ENCODE measurements at regions of chr12 and their contacts with region 1.

Region 1: GRCh38 chr12:69157023-69157655 is 82.2 kb upstream of the CPSF6 start:
- DNase-seq: peak; percentile 78 to 93 (median 87)
- ATAC-seq: peak; percentile 97
- H3K4me3 ChIP-seq: no peak overlapping the region
- H3K4me3 Mint-ChIP-seq: peak overlapping the region; percentile 65
- H3K27ac ChIP-seq: no peak overlapping the region
- H3K27ac Mint-ChIP-seq: no peak overlapping the region
- H3K4me1 ChIP-seq: peaks cover 9% of the 10 kb centered on the region
- H3K4me1 Mint-ChIP-seq: peaks cover 19% of the 10 kb centered on the region
- H3K27me3 ChIP-seq: no peaks in the 10 kb centered on the region
- H3K27me3 Mint-ChIP-seq: peaks cover 7% of the 10 kb centered on the region
- CTCF ChIP-seq: peak; percentile 78

Region 2: GRCh38 chr12:69247268-69248018 is 90.3 kb after region 1 on chr12:
- CTCF ChIA-PET with region 1: interaction called, 132 read pairs
- POLR2A ChIA-PET with region 1: interaction called, 4 read pairs
- intact Hi-C with region 1: no loop called
- DNase-seq: no peak
- ATAC-seq: no peak
- H3K4me3 ChIP-seq: no peak overlapping the region
- H3K4me3 Mint-ChIP-seq: peak overlapping the region; percentile 45
- H3K27ac ChIP-seq: no peak overlapping the region
- H3K27ac Mint-ChIP-seq: peak overlapping the region; percentile 66
- H3K4me1 ChIP-seq: peaks cover 51% of the 10 kb centered on the region
- H3K4me1 Mint-ChIP-seq: peaks cover 83% of the 10 kb centered on the region
- H3K27me3 ChIP-seq: no peaks in the 10 kb centered on the region
- H3K27me3 Mint-ChIP-seq: no peaks in the 10 kb centered on the region
- CTCF ChIP-seq: no peak

Region 3: GRCh38 chr12:69290545-69291277 is 133.6 kb after region 1 on chr12:
- CTCF ChIA-PET with region 1: interaction called, 10 read pairs
- POLR2A ChIA-PET with region 1: no interaction called
- intact Hi-C with region 1: no loop called
- DNase-seq: peak; percentile 64 to 89 (median 83)
- ATAC-seq: peak; percentile 100
- H3K4me3 ChIP-seq: no peak overlapping the region
- H3K4me3 Mint-ChIP-seq: no peak overlapping the region
- H3K27ac ChIP-seq: no peak overlapping the region
- H3K27ac Mint-ChIP-seq: no peak overlapping the region
- H3K4me1 ChIP-seq: no peaks in the 10 kb centered on the region
- H3K4me1 Mint-ChIP-seq: peaks cover 10% of the 10 kb centered on the region
- H3K27me3 ChIP-seq: peaks cover 0 to 9% of the 10 kb centered on the region in 2 experiments
- H3K27me3 Mint-ChIP-seq: peaks cover 24% of the 10 kb centered on the region
- CTCF ChIP-seq: peak; percentile 92

Region 4: DNA sequence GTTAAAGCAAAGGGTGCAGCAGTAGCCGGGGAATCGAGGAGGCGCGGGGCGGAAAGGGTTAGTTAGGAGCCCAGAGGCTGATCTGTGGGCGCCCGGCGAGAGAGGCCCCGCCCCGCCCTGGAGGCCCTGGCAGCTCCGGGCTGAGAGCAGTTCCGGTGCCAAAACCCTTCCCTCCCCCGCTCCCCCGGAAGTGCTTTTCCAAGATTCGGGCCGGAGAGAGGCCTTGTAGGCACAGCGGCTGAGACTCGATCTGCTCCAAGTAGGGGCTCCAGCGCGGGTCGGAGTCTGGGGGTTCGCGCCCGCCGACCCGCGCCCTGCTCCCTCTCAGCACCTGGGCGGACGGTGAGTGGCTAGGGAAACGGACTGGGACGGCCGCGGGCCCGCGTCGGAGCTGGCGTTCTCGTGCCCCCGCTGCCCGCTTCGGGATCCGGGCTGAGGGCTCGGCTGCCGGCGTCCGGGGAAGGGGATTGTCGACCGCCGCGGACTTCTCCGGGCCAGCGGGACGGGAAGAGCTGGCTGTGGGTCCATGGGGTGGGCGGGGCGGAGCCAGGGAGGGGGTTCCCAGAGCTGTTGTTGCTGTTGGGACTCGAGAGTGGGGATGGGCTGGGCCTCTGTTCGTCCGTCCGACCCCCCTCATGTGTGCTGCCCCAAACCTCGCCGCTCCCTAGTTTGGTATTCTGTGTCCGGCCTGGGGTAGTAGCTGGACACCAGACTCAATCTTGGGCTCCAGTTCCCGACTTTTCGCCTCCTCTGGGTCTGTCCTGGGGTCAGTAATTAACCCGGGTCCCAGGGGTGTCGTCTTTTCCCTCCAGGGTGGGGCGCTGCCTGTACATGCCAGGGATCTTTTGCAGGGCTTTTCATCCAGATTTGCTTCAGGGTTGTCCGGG is 313.3 kb after region 1 on chr12 and contains the start of gene FRS2:
- CTCF ChIA-PET with region 1: no interaction called
- POLR2A ChIA-PET with region 1: no interaction called
- intact Hi-C with region 1: loop called in 1 of 2 experiments (anchors 5 kb)
- DNase-seq: peak; percentile 66 to 91 (median 84)
- ATAC-seq: peak; percentile 97
- H3K4me3 ChIP-seq: peak within 1 kb of the TSS; percentile 86 to 88
- H3K4me3 Mint-ChIP-seq: peak within 1 kb of the TSS; percentile 98
- H3K27ac ChIP-seq: peak within 1 kb of the TSS; percentile 76 to 82
- H3K27ac Mint-ChIP-seq: peak within 1 kb of the TSS; percentile 97
- H3K4me1 ChIP-seq: peaks cover 30% of the 10 kb centered on the region
- H3K4me1 Mint-ChIP-seq: peaks cover 46% of the 10 kb centered on the region
- H3K27me3 ChIP-seq: no peaks in the 10 kb centered on the region
- H3K27me3 Mint-ChIP-seq: no peaks in the 10 kb centered on the region
- CTCF ChIP-seq: no peak
- total RNA-seq, gene FRS2: 31.1 to 32.4 TPM

Region 5: GRCh38 chr12:69585189-69586062 is 428.3 kb after region 1 on chr12 and contains the start of gene CCT2:
- CTCF ChIA-PET with region 1: interaction called, 3 read pairs
- POLR2A ChIA-PET with region 1: no interaction called
- intact Hi-C with region 1: loop called in 1 of 2 experiments (anchors 5 kb)
- DNase-seq: peak; percentile 92 to 98 (median 97)
- ATAC-seq: peak; percentile 88
- H3K4me3 ChIP-seq: peak within 1 kb of the TSS; percentile 88 to 98
- H3K4me3 Mint-ChIP-seq: peak within 1 kb of the TSS; percentile 96
- H3K27ac ChIP-seq: peak within 1 kb of the TSS; percentile 94 to 99
- H3K27ac Mint-ChIP-seq: peak within 1 kb of the TSS; percentile 96
- H3K4me1 ChIP-seq: peaks cover 11% of the 10 kb centered on the region
- H3K4me1 Mint-ChIP-seq: peaks cover 26% of the 10 kb centered on the region
- H3K27me3 ChIP-seq: no peaks in the 10 kb centered on the region
- H3K27me3 Mint-ChIP-seq: no peaks in the 10 kb centered on the region
- CTCF ChIP-seq: peak; percentile 22
- total RNA-seq, gene CCT2: 211 to 220 TPM

Region 6: GRCh38 chr12:69738351-69739286 is 581.5 kb after region 1 on chr12 and contains the start of gene RAB3IP:
- CTCF ChIA-PET with region 1: no interaction called
- POLR2A ChIA-PET with region 1: no interaction called
- intact Hi-C with region 1: loop called (anchors 5 to 10 kb)
- DNase-seq: peak; percentile 84 to 95 (median 93)
- ATAC-seq: peak; percentile 87
- H3K4me3 ChIP-seq: peak within 1 kb of the TSS; percentile 64 to 79
- H3K4me3 Mint-ChIP-seq: peak within 1 kb of the TSS; percentile 82
- H3K27ac ChIP-seq: peak within 1 kb of the TSS; percentile 73
- H3K27ac Mint-ChIP-seq: peak within 1 kb of the TSS; percentile 69
- H3K4me1 ChIP-seq: peaks cover 11% of the 10 kb centered on the region
- H3K4me1 Mint-ChIP-seq: peaks cover 24% of the 10 kb centered on the region
- H3K27me3 ChIP-seq: no peaks in the 10 kb centered on the region
- H3K27me3 Mint-ChIP-seq: peaks cover 4% of the 10 kb centered on the region
- CTCF ChIP-seq: peak; percentile 89
- total RNA-seq, gene RAB3IP: 14.8 to 15.1 TPM

Measured in CD8-positive, alpha-beta T cell (primary cell).